GM12878 (cell line): ENCODE measurements at regions of chr15 and their contacts with region 1.

Region 1: DNA sequence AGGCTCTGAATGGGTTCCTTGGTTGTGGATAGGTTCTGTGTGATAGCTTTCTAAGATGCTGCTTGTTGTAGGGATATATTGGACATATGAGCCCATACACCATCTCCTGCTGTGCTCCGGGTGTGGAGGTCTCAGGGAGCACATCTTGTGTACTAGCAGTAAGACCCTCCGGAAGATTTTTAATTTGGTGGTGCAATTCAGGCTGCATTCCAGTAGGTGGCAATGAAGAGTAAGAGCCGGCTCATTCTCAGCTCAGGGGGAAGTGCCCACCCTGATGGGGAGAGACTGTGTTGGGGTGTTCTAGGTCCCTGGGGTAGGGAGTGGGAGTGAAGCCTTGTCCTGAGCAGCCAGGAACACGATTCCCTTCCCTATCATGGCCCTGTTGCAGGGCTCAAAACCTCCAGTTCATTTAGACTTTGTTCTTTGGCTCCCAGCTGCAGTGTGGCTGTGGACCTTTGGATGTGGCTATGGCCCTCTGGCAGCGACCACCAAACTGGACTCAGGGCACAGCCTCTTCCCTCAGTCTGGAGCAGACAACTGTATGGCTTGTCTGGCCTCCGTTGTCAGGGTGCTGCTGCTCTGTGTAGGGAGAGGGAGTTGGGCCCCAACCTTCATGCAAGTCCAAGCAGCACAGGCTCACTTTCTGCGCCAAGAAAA is 104.7 kb downstream of the UNC13C start:
- DNase-seq: no peak
- ATAC-seq: peak; percentile 68
- H3K4me3 ChIP-seq: no peak overlapping the region
- H3K27ac ChIP-seq: no peak overlapping the region
- H3K4me1 ChIP-seq: no peaks in the 10 kb centered on the region
- H3K27me3 ChIP-seq: no peaks in the 10 kb centered on the region
- CTCF ChIP-seq: peak; percentile 56 to 80 (median 61)
- EP300 ChIP-seq: no peak
- POLR2A ChIP-seq: no peak
- RAD21 ChIP-seq: peak; percentile 72

Region 2: DNA sequence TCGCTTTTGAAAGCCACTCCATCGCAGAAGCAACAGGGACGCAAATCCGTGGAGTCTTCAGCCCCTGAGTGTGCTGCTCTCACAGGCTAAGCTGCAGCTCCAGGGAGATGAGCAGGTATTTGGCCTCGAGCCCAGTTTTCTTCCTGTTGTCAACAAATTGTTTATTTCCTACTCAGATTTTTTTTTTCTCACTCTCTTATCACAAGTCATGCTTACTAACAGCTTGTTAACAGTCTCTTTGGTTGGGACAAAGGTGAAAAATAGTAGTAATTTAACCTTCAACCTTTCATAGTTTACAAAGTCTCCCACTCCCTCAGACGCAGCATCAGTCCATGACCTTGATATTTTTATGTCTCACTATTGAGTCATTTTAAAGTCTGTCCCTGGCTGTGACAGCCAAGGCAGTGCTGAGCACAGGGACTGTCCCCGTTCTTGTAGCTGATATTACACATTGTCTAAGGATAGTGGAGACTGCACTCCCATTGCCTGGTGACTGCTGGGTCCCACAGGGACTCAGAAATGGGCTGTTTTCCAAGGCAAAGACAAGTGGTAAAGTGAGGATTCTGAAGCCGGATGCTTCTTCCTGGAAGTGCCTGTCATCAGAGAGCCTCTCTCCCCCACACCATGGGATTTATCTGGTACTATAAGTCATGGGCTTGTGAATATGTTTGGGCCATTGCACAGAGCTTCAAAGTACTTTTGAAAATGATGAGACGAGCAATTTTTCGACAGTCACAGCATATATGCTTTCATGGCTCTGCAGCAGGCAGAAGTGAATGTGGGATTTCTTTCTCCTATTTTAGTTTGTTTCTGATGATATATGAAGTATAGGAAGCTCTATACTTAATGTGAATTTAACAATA is 164.6 kb before region 1 on chr15:
- CTCF ChIA-PET with region 1: no interaction called
- POLR2A ChIA-PET with region 1: no interaction called
- RAD21 ChIA-PET with region 1: no interaction called
- SMC1A ChIA-PET with region 1: no interaction called
- in situ Hi-C with region 1: no loop called
- intact Hi-C with region 1: no loop called
- DNase-seq: no peak
- ATAC-seq: peak; percentile 25; the same call in 1 of the 3 replicates
- H3K4me3 ChIP-seq: no peak overlapping the region
- H3K27ac ChIP-seq: no peak overlapping the region
- H3K4me1 ChIP-seq: no peaks in the 10 kb centered on the region
- H3K27me3 ChIP-seq: no peaks in the 10 kb centered on the region
- CTCF ChIP-seq: no peak
- EP300 ChIP-seq: no peak
- POLR2A ChIP-seq: no peak
- RAD21 ChIP-seq: no peak

Region 3: GRCh38 chr15:53976844-53977392 is 106.0 kb before region 1 on chr15:
- CTCF ChIA-PET with region 1: interaction called, 16 read pairs
- POLR2A ChIA-PET with region 1: interaction called, 3 read pairs
- RAD21 ChIA-PET with region 1: interaction called, 76 read pairs
- SMC1A ChIA-PET with region 1: interaction called, 52 read pairs
- in situ Hi-C with region 1: no loop called
- intact Hi-C with region 1: loop called (anchors 5 kb)
- DNase-seq: no peak
- ATAC-seq: peak; percentile 72
- H3K4me3 ChIP-seq: no peak overlapping the region
- H3K27ac ChIP-seq: no peak overlapping the region
- H3K4me1 ChIP-seq: no peaks in the 10 kb centered on the region
- H3K27me3 ChIP-seq: no peaks in the 10 kb centered on the region
- CTCF ChIP-seq: peak in 2 of 3 experiments; percentile 34 to 62; a peak in 2 of 6 replicates
- EP300 ChIP-seq: no peak
- POLR2A ChIP-seq: no peak
- RAD21 ChIP-seq: peak; percentile 24; the same call in 1 of the 2 replicates

Region 4: GRCh38 chr15:54064365-54064764 is 18.6 kb before region 1 on chr15:
- CTCF ChIA-PET with region 1: interaction called, 23 read pairs
- POLR2A ChIA-PET with region 1: no interaction called
- RAD21 ChIA-PET with region 1: interaction called, 5 read pairs
- SMC1A ChIA-PET with region 1: interaction called, 12 read pairs
- in situ Hi-C with region 1: no loop called
- intact Hi-C with region 1: no loop called
- DNase-seq: no peak
- ATAC-seq: no peak
- H3K4me3 ChIP-seq: no peak overlapping the region
- H3K27ac ChIP-seq: no peak overlapping the region
- H3K4me1 ChIP-seq: no peaks in the 10 kb centered on the region
- H3K27me3 ChIP-seq: no peaks in the 10 kb centered on the region
- CTCF ChIP-seq: no peak
- EP300 ChIP-seq: no peak
- POLR2A ChIP-seq: no peak
- RAD21 ChIP-seq: no peak

Region 5: DNA sequence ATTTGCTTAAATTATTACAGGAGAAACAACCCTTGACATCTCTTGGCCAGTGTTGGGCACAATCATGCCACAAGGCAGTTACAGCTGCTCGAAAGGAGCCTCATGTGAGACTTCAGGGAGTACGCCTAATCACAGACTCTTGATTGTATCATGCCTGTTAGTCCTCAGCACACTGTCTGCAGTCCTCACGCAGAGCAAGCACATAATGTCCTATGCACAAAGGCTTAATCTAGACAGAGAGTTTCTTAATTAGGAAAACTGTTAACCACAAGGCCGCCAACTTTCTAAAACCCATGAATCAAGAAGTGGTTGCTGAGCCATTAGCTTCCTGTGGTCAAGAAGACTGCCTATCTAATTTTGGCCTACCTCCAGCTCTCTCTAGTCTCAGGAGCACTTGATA is 67.3 kb after region 1 on chr15:
- CTCF ChIA-PET with region 1: interaction called, 13 read pairs
- POLR2A ChIA-PET with region 1: interaction called, 3 read pairs
- RAD21 ChIA-PET with region 1: interaction called, 10 read pairs
- SMC1A ChIA-PET with region 1: interaction called, 44 read pairs
- in situ Hi-C with region 1: no loop called
- intact Hi-C with region 1: no loop called
- DNase-seq: peak; percentile 69
- ATAC-seq: peak; percentile 96
- H3K4me3 ChIP-seq: no peak overlapping the region
- H3K27ac ChIP-seq: no peak overlapping the region
- H3K4me1 ChIP-seq: no peaks in the 10 kb centered on the region
- H3K27me3 ChIP-seq: no peaks in the 10 kb centered on the region
- CTCF ChIP-seq: no peak
- EP300 ChIP-seq: peak; percentile 95
- POLR2A ChIP-seq: no peak
- RAD21 ChIP-seq: peak; percentile 0; the same call in 1 of the 2 replicates

Region 6: GRCh38 chr15:54298396-54298795 is 215.4 kb after region 1 on chr15:
- CTCF ChIA-PET with region 1: interaction called, 4 read pairs
- POLR2A ChIA-PET with region 1: interaction called, 4 read pairs
- RAD21 ChIA-PET with region 1: interaction called, 20 read pairs
- SMC1A ChIA-PET with region 1: interaction called, 5 read pairs
- in situ Hi-C with region 1: no loop called
- intact Hi-C with region 1: no loop called
- DNase-seq: peak; percentile 32
- ATAC-seq: peak; percentile 94
- H3K4me3 ChIP-seq: no peak overlapping the region
- H3K27ac ChIP-seq: no peak overlapping the region
- H3K4me1 ChIP-seq: no peaks in the 10 kb centered on the region
- H3K27me3 ChIP-seq: no peaks in the 10 kb centered on the region
- CTCF ChIP-seq: no peak
- EP300 ChIP-seq: peak; percentile 80 to 88
- POLR2A ChIP-seq: no peak
- RAD21 ChIP-seq: no peak

Region 7: GRCh38 chr15:55094136-55094535 is 1011.2 kb after region 1 on chr15:
- CTCF ChIA-PET with region 1: no interaction called
- POLR2A ChIA-PET with region 1: no interaction called
- RAD21 ChIA-PET with region 1: no interaction called
- SMC1A ChIA-PET with region 1: no interaction called
- in situ Hi-C with region 1: no loop called
- intact Hi-C with region 1: no loop called
- DNase-seq: no peak
- ATAC-seq: no peak
- H3K4me3 ChIP-seq: no peak overlapping the region
- H3K27ac ChIP-seq: no peak overlapping the region
- H3K4me1 ChIP-seq: no peaks in the 10 kb centered on the region
- H3K27me3 ChIP-seq: no peaks in the 10 kb centered on the region
- CTCF ChIP-seq: no peak
- EP300 ChIP-seq: no peak
- POLR2A ChIP-seq: no peak
- RAD21 ChIP-seq: no peak

Region 8: GRCh38 chr15:55108858-55109518 is 1026.0 kb after region 1 on chr15:
- CTCF ChIA-PET with region 1: interaction called, 4 read pairs
- POLR2A ChIA-PET with region 1: no interaction called
- RAD21 ChIA-PET with region 1: no interaction called
- SMC1A ChIA-PET with region 1: interaction called, 7 read pairs
- in situ Hi-C with region 1: no loop called
- intact Hi-C with region 1: loop called (anchors 1 kb)
- DNase-seq: peak; percentile 9
- ATAC-seq: peak; percentile 91
- H3K4me3 ChIP-seq: no peak overlapping the region
- H3K27ac ChIP-seq: no peak overlapping the region
- H3K4me1 ChIP-seq: no peaks in the 10 kb centered on the region
- H3K27me3 ChIP-seq: no peaks in the 10 kb centered on the region
- CTCF ChIP-seq: peak; percentile 74 to 83 (median 77)
- EP300 ChIP-seq: 0 out of 4 replicates have a peak, but pooled peaks of 1 of the 2 experiments have one; percentile 26
- POLR2A ChIP-seq: no peak
- RAD21 ChIP-seq: peak; percentile 70